ENCODE measurements at regions of chr19 and their contacts with region 1.

Region 1: GRCh38 chr19:20077791-20078463 is at the start of gene ZNF90:
- DNase-seq: peak; percentile 95 to 97
- ATAC-seq: peak; percentile 97
- H3K4me3 ChIP-seq: peak within 1 kb of the TSS; percentile 0 to 47
- H3K27ac ChIP-seq: no peak within 1 kb of the TSS
- H3K4me1 ChIP-seq: no peaks in the 10 kb centered on the region
- H3K27me3 ChIP-seq: no peaks in the 10 kb centered on the region
- total RNA-seq, gene ZNF90: 2.4 to 6.5 TPM

Region 2: GRCh38 chr19:19524053-19524452 is 553.9 kb before region 1 on chr19:
- intact Hi-C with region 1: loop called in 1 of 2 experiments (anchors 5 kb)
- DNase-seq: no peak
- ATAC-seq: no peak
- H3K4me3 ChIP-seq: no peak overlapping the region
- H3K27ac ChIP-seq: no peak overlapping the region
- H3K4me1 ChIP-seq: no peaks in the 10 kb centered on the region
- H3K27me3 ChIP-seq: no peaks in the 10 kb centered on the region

Region 3: GRCh38 chr19:20039203-20039723 is 38.7 kb before region 1 on chr19 and contains the start of gene ZNF682:
- intact Hi-C with region 1: loop called in 1 of 2 experiments (anchors 5 kb)
- DNase-seq: peak; percentile 95 to 96
- ATAC-seq: peak; percentile 100
- H3K4me3 ChIP-seq: peak within 1 kb of the TSS; percentile 71 to 93
- H3K27ac ChIP-seq: peak within 1 kb of the TSS in 1 of 2 donors; percentile 15
- H3K4me1 ChIP-seq: no peaks in the 10 kb centered on the region
- H3K27me3 ChIP-seq: no peaks in the 10 kb centered on the region
- total RNA-seq, gene ZNF682: 4.2 to 7.5 TPM

Region 4: GRCh38 chr19:20167020-20167644 is 89.2 kb after region 1 on chr19 and contains the start of gene ZNF486:
- intact Hi-C with region 1: loop called in 1 of 2 experiments (anchors 5 kb)
- DNase-seq: peak; percentile 97
- ATAC-seq: peak; percentile 95
- H3K4me3 ChIP-seq: peak within 1 kb of the TSS; percentile 35 to 40
- H3K27ac ChIP-seq: peak within 1 kb of the TSS in 1 of 2 donors; percentile 66
- H3K4me1 ChIP-seq: no peaks in the 10 kb centered on the region
- H3K27me3 ChIP-seq: no peaks in the 10 kb centered on the region
- total RNA-seq, gene ZNF486: 4.1 to 7.4 TPM

Region 5: DNA sequence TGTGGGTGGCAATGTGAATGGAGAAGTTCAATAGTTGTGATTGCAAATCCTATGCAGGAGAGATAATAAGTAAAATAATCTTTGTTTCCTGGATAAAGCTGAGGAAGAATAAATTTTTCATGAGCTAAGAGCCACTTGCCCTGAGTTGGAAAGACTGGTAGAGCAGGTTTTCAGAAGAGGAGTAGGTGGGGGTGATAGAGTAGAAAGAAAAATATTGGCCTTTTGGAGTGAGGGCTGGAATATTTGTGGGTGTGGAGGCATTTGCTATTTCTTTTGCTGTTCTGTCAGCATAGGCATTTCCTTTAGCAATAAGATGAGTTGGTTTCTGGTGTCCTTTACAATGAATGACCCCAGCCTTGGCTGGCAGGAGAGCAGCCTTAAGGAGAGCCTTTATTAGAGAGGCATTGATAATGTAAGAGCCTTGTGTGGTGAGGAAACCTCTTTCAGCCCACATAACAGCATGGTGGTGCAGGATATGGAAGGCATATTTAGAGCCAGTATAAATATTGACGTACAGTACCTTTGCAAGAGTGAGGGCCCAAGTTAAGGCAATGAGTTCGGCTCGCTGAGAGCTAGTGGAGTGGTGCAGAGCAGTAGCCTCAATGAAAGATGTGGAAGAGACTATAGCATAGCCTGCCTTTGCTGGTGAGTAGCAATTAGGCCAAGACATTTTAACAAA is 1052.3 kb after region 1 on chr19:
- intact Hi-C with region 1: no loop called
- DNase-seq: no peak
- ATAC-seq: no peak
- H3K4me3 ChIP-seq: no peak overlapping the region
- H3K27ac ChIP-seq: no peak overlapping the region
- H3K4me1 ChIP-seq: no peaks in the 10 kb centered on the region
- H3K27me3 ChIP-seq: no peaks in the 10 kb centered on the region